ENCODE measurements at regions of chr2 and their contacts with region 1.

Region 1: GRCh38 chr2:178891265-178891958 is 84.2 kb upstream of the TTN start:
- DNase-seq: peak; percentile 72 to 80
- H3K4me3 ChIP-seq: no peak overlapping the region
- H3K4me3 Mint-ChIP-seq: no peak overlapping the region
- H3K27ac Mint-ChIP-seq: no peak overlapping the region
- H3K4me1 ChIP-seq: no peaks in the 10 kb centered on the region
- H3K4me1 Mint-ChIP-seq: no peaks in the 10 kb centered on the region
- H3K27me3 ChIP-seq: no peaks in the 10 kb centered on the region
- H3K27me3 Mint-ChIP-seq: no peaks in the 10 kb centered on the region
- CTCF ChIP-seq: peak; percentile 89 to 90

Region 2: DNA sequence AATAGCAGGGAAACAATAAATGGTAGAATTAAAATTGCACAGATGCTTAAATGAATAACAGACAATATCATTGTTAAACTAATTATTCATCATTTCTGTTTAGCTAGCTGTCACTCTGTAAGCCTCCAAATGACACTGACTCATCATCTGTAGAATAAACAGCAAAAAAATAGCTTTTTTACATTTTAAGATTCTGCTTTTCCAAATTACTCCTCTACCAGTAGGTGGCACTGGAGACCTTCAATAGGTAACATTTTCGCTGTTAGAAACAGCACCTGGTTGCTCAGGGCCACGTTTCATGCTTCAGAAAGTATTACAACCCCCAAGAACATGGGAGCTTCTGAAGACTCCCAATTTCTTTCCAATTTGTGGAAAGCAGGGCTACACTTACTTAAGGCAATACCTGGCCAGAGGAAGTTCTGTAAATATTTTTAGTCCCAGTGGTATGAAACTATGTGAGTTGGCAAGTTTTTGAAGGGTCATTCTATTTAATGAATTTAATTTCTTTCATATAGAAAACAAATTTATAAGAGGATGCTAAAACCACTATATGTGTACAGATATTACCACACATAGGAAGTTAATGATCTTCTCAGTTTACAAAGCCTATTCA is 129.5 kb before region 1 on chr2:
- CTCF ChIA-PET with region 1: interaction called, 5 read pairs
- POLR2A ChIA-PET with region 1: no interaction called
- intact Hi-C with region 1: loop called (anchors 1 kb)
- DNase-seq: peak; percentile 35 to 53
- H3K4me3 ChIP-seq: no peak overlapping the region
- H3K4me3 Mint-ChIP-seq: no peak overlapping the region
- H3K27ac Mint-ChIP-seq: no peak overlapping the region
- H3K4me1 ChIP-seq: no peaks in the 10 kb centered on the region
- H3K4me1 Mint-ChIP-seq: no peaks in the 10 kb centered on the region
- H3K27me3 ChIP-seq: no peaks in the 10 kb centered on the region
- H3K27me3 Mint-ChIP-seq: no peaks in the 10 kb centered on the region
- CTCF ChIP-seq: peak; percentile 74 to 83

Region 3: GRCh38 chr2:179020156-179020750 is 128.8 kb after region 1 on chr2:
- CTCF ChIA-PET with region 1: no interaction called
- POLR2A ChIA-PET with region 1: no interaction called
- intact Hi-C with region 1: loop called (anchors 2 kb)
- DNase-seq: peak; percentile 66 to 67
- H3K4me3 ChIP-seq: no peak overlapping the region
- H3K4me3 Mint-ChIP-seq: no peak overlapping the region
- H3K27ac Mint-ChIP-seq: no peak overlapping the region
- H3K4me1 ChIP-seq: no peaks in the 10 kb centered on the region
- H3K4me1 Mint-ChIP-seq: no peaks in the 10 kb centered on the region
- H3K27me3 ChIP-seq: no peaks in the 10 kb centered on the region
- H3K27me3 Mint-ChIP-seq: no peaks in the 10 kb centered on the region
- CTCF ChIP-seq: peak; percentile 61 to 71

Measured in Caco-2 (cell line).